ENCODE measurements at regions of chr7 and their contacts with region 1.

Region 1: DNA sequence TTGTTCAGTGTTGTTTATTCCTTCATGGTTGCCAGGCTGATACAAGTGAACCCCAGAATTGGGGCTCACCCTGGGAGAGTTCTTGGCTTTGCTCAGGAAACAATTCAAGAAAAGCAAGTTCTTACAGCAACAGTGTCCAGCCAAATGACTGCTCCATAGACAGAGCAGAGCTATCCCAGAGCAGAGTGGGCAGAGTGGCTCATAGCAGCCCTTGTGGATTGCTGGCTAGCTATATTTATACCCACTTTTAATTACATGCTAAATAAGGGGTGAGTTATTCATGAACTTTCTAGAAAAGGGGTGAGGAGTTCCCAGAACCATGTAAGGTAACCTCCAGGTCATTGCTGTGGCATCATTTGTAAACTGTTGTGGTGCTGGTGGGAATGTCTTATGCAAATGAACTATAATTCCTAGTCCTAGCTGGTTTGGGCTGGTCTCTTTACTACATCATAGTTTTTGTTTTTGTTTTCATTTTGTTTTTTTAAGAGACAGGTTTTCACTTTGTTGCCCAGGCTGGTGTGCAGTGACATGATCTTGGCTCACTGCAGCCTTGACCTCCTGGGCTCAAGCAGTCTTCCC is 59.9 kb upstream of the HBP1 start:
- DNase-seq: no peak
- ATAC-seq: no peak
- H3K4me3 ChIP-seq: no peak overlapping the region
- H3K27ac ChIP-seq: no peak overlapping the region
- H3K4me1 ChIP-seq: no peaks in the 10 kb centered on the region
- H3K27me3 ChIP-seq: no peaks in the 10 kb centered on the region
- CTCF ChIP-seq: no peak
- EP300 ChIP-seq: no peak
- POLR2A ChIP-seq: no peak
- RAD21 ChIP-seq: no peak

Region 2: GRCh38 chr7:107056728-107057473 is 52.0 kb before region 1 on chr7:
- CTCF ChIA-PET with region 1: no interaction called
- POLR2A ChIA-PET with region 1: no interaction called
- RAD21 ChIA-PET with region 1: no interaction called
- SMC1A ChIA-PET with region 1: no interaction called
- in situ Hi-C with region 1: no loop called
- intact Hi-C with region 1: no loop called
- DNase-seq: no peak
- ATAC-seq: no peak
- H3K4me3 ChIP-seq: no peak overlapping the region
- H3K27ac ChIP-seq: no peak overlapping the region
- H3K4me1 ChIP-seq: no peaks in the 10 kb centered on the region
- H3K27me3 ChIP-seq: no peaks in the 10 kb centered on the region
- CTCF ChIP-seq: no peak
- EP300 ChIP-seq: no peak
- POLR2A ChIP-seq: no peak
- RAD21 ChIP-seq: no peak

Region 3: GRCh38 chr7:107078517-107078966 is 30.3 kb before region 1 on chr7:
- CTCF ChIA-PET with region 1: no interaction called
- POLR2A ChIA-PET with region 1: no interaction called
- RAD21 ChIA-PET with region 1: no interaction called
- SMC1A ChIA-PET with region 1: no interaction called
- in situ Hi-C with region 1: no loop called
- intact Hi-C with region 1: no loop called
- DNase-seq: no peak
- ATAC-seq: no peak
- H3K4me3 ChIP-seq: no peak overlapping the region
- H3K27ac ChIP-seq: no peak overlapping the region
- H3K4me1 ChIP-seq: no peaks in the 10 kb centered on the region
- H3K27me3 ChIP-seq: no peaks in the 10 kb centered on the region
- CTCF ChIP-seq: no peak
- EP300 ChIP-seq: no peak
- POLR2A ChIP-seq: no peak
- RAD21 ChIP-seq: no peak

Region 4: DNA sequence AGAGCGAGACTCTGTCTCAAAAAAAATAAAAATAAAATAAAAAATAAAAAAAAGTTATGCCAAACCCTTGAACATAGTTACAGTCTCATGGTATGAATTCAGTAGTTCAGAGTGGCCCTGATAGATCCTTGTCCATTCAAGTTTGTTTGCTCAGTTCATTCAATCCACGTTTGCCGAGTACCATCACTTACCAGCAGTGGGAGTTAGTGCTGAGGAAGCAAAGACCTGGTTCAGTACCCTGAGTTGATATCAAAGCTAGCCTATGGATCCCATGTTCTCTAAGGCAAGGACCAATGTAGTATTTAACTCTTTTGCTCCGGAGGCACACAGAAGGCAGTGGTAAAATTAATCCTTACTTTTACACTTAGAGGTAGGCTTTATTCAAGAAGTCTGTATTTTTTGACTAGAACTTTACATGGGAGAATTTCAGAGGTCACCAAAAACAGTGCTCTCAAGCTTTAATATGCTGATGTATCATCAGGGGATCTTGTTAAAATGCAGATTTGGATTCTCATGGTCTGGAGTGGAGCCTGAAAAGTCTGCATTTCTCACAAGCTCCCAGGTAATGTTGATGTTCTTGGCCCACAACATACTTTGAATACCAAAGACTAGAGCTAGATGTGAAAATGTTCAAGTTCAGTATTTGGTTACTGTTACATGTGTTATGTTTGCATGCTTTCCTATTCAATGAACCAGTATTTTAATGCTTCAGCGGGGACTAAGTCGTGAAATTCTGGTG is 21.8 kb after region 1 on chr7:
- CTCF ChIA-PET with region 1: interaction called, 4 read pairs
- POLR2A ChIA-PET with region 1: interaction called, 10 read pairs
- RAD21 ChIA-PET with region 1: no interaction called
- SMC1A ChIA-PET with region 1: interaction called, 3 read pairs
- in situ Hi-C with region 1: no loop called
- intact Hi-C with region 1: no loop called
- DNase-seq: no peak
- ATAC-seq: no peak
- H3K4me3 ChIP-seq: no peak overlapping the region
- H3K27ac ChIP-seq: no peak overlapping the region
- H3K4me1 ChIP-seq: peaks cover 6% of the 10 kb centered on the region
- H3K27me3 ChIP-seq: no peaks in the 10 kb centered on the region
- CTCF ChIP-seq: no peak
- EP300 ChIP-seq: no peak
- POLR2A ChIP-seq: no peak
- RAD21 ChIP-seq: no peak

Region 5: DNA sequence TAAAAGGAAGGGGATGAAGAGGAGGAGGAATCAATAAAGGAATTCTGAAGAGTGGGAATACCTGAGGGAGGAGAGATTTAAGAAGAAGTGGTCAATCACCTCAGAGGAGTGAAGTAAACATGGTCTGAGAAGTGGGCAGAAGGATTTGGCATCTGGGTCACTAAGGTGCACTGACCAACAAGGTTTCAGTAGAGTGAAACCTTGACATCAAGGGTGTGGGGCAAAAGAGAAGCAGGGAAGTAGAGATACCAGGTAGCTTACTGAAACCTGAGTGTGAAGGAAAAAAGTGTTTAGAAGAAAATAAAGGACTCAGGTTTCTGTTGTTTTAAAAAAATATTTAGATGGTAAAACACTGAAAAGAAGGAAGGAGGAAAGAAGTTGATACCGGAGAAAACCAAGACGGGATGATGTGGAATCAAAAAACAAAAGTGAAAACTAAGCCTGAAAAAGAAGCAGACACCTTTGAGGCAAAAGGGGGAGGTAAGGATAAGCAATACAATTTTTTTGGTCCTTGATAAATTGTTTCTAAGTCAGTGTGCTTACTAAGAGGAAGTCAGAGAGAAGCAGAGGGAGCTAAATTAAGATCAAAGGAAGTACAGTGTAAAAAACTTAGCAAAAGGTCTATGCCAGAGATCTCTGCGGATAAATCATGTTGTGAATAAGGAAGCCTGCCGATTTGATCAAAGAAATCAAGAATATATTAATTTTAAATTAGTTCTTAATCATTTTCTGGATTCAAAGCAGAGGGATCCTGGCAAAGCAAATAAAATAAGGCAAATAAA is 223.8 kb after region 1 on chr7:
- CTCF ChIA-PET with region 1: no interaction called
- POLR2A ChIA-PET with region 1: no interaction called
- RAD21 ChIA-PET with region 1: no interaction called
- SMC1A ChIA-PET with region 1: no interaction called
- in situ Hi-C with region 1: no loop called
- intact Hi-C with region 1: no loop called
- DNase-seq: peak; percentile 13
- ATAC-seq: peak; percentile 92
- H3K4me3 ChIP-seq: peak overlapping the region; percentile 42
- H3K27ac ChIP-seq: peak overlapping the region; percentile 64
- H3K4me1 ChIP-seq: no peaks in the 10 kb centered on the region
- H3K27me3 ChIP-seq: no peaks in the 10 kb centered on the region
- CTCF ChIP-seq: no peak
- EP300 ChIP-seq: no peak
- POLR2A ChIP-seq: no peak
- RAD21 ChIP-seq: no peak